ENCODE measurements at regions of chr19 and their contacts with region 1.

Region 1: DNA sequence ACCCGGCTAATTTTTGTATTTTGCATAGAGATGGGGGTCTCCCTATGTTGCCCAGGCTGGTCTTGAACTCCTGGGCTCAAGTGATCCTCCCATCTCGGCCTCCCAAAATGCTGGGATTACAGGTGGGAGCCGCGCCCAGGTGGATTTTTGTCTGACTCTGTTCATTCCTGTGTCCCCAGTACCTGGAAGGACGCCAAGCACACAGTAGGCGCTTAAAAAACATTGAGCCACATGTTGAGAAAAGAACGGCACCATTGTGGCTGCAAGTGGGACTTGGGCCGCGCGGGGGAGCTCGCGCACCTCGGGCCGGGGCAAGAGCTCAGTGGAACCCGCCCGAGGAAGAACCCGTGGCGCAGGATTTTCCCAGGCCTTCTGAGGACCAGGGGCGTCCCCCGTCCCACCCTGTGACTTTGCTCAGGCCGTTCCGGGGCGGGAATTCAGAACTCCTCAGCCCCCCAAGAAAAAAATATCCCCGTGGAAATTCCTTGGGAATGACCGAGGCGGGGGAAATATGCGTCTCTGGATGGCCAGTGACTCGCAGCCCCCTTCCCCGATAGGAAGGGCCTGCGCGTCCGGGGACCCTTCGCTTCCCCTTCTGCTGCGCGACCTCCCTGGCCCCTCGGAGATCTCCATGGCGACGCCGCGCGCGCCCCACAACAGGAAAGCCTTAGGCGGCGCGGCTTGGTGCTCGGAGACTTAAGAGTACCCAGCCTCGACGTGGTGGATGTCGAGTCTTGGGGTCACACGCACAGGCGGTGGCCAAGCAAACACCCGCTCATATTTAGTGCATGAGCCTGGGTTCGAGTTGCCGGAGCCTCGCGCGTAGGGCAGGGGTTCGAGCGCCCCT is 1.4 kb upstream of the ICAM1 start:
- DNase-seq: peak; percentile 93
- H3K4me3 Mint-ChIP-seq: peak overlapping the region; percentile 85
- H3K27ac Mint-ChIP-seq: peak overlapping the region; percentile 89
- H3K4me1 Mint-ChIP-seq: peaks cover 30% of the 10 kb centered on the region
- H3K27me3 Mint-ChIP-seq: no peaks in the 10 kb centered on the region

Region 2: GRCh38 chr19:10279737-10280442 is 10.3 kb after region 1 on chr19:
- CTCF ChIA-PET with region 1: interaction called, 57 read pairs
- POLR2A ChIA-PET with region 1: interaction called, 15 read pairs
- intact Hi-C with region 1: no loop called
- DNase-seq: no peak
- H3K4me3 Mint-ChIP-seq: no peak overlapping the region
- H3K27ac Mint-ChIP-seq: no peak overlapping the region
- H3K4me1 Mint-ChIP-seq: peaks cover 14% of the 10 kb centered on the region
- H3K27me3 Mint-ChIP-seq: no peaks in the 10 kb centered on the region

Region 3: DNA sequence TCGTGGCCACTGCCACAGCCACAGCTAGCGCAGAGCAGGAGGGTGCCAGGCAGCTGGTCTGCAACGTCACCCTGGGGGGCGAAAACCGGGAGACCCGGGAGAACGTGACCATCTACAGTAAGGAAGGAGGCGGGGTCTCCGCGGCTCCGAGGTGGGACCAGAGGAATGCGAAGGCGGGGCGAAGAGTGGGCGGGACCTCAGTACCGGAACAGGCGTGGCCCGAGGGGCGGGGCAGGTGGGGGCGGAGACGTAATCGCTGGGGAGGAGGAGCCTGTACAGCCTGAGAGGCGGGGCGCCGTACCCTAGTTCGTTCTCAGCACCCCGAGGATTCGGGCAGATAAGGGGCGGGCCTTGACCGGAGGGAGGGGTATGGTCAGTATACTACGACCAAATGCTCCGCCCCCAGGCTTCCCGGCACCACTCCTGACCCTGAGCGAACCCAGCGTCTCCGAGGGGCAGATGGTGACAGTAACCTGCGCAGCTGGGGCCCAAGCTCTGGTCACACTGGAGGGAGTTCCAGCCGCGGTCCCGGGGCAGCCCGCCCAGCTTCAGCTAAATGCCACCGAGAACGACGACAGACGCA is 22.7 kb after region 1 on chr19:
- CTCF ChIA-PET with region 1: interaction called, 57 read pairs
- POLR2A ChIA-PET with region 1: interaction called, 47 read pairs
- intact Hi-C with region 1: loop called (anchors 1 kb)
- DNase-seq: peak; percentile 87
- H3K4me3 Mint-ChIP-seq: peak overlapping the region; percentile 68
- H3K27ac Mint-ChIP-seq: no peak overlapping the region
- H3K4me1 Mint-ChIP-seq: peaks cover 61% of the 10 kb centered on the region
- H3K27me3 Mint-ChIP-seq: peaks cover 76% of the 10 kb centered on the region

Region 4: DNA sequence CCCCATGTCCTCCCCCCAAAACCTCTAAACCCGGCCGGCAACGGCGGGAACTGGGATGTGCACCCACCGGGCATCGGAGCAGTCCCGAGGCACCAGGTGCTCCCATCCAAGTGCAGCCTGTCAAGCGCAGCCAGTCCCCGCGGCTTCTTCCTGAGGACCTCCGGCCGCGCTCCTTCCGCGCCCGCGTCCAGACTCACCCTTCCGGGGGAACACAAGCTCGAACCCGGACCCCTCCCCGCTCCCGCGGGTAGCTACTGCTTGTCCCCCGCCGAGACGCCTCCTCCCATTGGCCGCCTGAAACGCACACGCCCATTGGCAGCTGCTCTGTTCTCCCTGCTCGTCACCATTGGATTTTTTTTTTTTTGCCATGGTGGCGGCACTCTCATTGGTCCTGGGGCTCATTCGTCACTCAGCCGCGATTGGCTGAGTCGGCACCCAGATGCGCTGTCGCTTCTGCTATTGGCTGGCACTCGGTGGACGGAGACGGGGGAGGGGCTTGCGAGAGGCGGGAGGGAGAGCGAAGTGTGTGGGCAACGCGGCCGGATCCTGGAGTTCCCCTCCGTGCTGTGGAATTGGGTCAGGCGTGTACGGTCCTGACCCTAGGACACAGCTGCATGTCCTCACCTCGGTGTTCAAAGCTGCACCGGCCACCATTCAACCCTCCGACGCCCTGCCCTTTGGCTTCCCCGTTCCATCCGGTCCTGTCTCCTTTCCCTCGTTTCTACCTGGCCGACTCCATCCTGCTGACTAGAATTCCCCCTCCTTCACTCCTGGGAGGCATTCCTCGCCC is 111.0 kb after region 1 on chr19 and contains the start of gene TYK2:
- CTCF ChIA-PET with region 1: interaction called, 212 read pairs
- POLR2A ChIA-PET with region 1: interaction called, 20 read pairs
- intact Hi-C with region 1: loop called (anchors 2 kb)
- DNase-seq: peak; percentile 98
- H3K4me3 Mint-ChIP-seq: peak within 1 kb of the TSS; percentile 88
- H3K27ac Mint-ChIP-seq: peak within 1 kb of the TSS; percentile 88
- H3K4me1 Mint-ChIP-seq: peaks cover 20% of the 10 kb centered on the region
- H3K27me3 Mint-ChIP-seq: no peaks in the 10 kb centered on the region
- total RNA-seq, gene TYK2: 168 to 186 TPM

Region 5: DNA sequence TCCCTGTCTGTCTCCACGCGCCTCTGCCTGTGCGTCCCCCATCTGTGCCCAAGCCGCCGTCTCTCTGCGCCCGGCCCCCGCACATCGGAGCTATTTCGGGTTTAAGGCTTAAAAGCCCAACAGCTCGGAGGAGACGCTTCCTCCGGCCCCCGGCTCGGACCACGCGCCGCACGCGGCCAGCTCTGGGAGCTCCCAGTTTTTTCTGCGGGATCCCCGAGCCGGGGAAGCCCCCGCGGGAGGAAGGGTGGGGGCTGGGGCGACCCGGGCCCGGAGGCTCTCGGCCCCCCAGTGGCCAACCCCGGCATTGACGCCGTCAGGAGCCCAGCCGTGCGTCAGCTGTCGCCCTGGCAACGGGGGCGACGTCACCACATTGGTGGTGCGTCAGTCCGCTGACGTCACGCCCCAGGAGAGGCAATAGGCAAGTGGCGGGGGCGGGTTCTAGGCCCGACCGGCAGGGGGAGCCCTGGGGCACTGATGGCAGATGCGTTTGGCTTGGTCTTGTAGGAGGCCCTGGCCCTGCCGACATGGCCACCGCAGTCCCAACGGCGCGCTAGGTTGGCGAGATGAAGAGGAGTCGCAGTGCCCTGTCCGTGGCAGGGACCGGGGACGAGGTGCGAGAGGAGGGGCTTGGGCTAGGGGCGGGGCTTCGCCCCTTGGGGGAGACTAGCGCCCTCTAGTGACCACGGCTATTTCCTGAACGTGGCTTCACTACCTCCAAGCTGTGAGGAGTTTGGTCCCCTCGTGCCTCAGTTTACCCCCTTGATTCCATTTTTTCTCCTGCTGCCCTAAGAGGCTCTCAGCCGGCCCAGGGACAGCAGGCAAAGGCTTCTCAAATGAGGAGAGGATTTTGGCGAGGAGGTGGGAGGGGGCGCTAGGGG is 147.1 kb after region 1 on chr19:
- CTCF ChIA-PET with region 1: interaction called, 22 read pairs
- POLR2A ChIA-PET with region 1: interaction called, 3 read pairs
- intact Hi-C with region 1: no loop called
- DNase-seq: peak; percentile 96
- H3K4me3 Mint-ChIP-seq: peak overlapping the region; percentile 73
- H3K27ac Mint-ChIP-seq: peak overlapping the region; percentile 86
- H3K4me1 Mint-ChIP-seq: peaks cover 51% of the 10 kb centered on the region
- H3K27me3 Mint-ChIP-seq: peaks cover 35% of the 10 kb centered on the region